ENCODE measurements at regions of chr7 and their contacts with region 1.

Region 1: DNA sequence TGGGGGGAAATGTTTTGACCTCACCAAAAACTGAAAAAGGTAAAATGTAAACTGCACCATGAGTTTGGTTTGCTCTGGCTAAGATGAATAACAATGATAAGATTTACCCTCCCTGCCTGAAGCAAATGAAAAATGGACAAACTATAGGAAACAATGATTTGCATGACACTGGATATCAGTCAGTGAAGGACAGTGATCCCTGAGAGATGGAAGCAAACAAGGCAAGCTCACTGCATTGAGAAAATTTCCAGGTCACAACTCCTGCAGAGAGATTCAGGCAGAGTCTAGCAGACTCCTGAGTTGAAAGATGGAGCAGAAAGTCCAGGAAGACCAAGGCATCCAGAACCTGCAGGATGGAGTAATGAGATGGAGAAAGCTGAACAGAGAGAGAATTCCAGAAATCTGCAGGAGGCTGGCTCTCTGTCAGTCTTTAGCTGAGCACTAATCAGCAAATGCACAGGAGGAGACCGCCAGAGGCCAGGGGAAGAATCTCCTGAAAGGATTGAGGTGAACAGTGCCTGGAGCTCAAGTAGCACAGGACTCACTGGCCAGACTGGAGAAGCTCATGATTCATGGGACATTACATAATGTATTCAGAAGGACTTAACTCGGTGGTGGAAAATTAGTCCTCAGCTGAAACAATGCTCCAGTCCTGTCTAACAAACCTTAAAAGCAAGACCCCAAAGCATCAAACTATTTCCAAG is 51.2 kb upstream of the PALS2 start:
- DNase-seq: no peak
- H3K4me3 Mint-ChIP-seq: no peak overlapping the region
- H3K27ac Mint-ChIP-seq: no peak overlapping the region
- H3K4me1 Mint-ChIP-seq: no peaks in the 10 kb centered on the region
- H3K27me3 Mint-ChIP-seq: peaks cover 63% of the 10 kb centered on the region
- CTCF ChIP-seq: no peak

Region 2: DNA sequence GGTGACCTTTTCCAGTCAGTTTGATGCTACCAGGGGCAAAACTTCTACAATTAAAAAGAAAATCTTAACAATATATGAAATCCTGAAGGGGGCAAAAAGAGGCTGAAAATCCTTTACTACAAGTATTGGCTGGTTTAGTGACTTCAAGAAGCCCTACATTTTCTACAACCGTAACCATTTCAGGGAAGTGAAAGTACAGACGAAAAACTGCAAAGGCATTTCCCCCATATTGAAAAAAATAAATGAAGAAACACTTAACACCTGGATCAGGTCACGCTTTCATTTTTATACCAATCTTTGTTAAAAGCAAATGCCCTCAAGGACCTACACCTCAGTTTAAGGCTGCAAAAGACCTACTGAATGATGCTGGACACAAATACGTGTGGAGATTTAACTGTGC is 1756.5 kb before region 1 on chr7:
- CTCF ChIA-PET with region 1: no interaction called
- intact Hi-C with region 1: loop called (anchors 10 kb)
- DNase-seq: no peak
- H3K4me3 Mint-ChIP-seq: no peak overlapping the region
- H3K27ac Mint-ChIP-seq: no peak overlapping the region
- H3K4me1 Mint-ChIP-seq: no peaks in the 10 kb centered on the region
- H3K27me3 Mint-ChIP-seq: peaks cover 48% of the 10 kb centered on the region
- CTCF ChIP-seq: no peak

Measured in Calu3 (cell line).